HCT116 (cell line): ENCODE measurements at regions of chr6 and their contacts with region 1.

Region 1: DNA sequence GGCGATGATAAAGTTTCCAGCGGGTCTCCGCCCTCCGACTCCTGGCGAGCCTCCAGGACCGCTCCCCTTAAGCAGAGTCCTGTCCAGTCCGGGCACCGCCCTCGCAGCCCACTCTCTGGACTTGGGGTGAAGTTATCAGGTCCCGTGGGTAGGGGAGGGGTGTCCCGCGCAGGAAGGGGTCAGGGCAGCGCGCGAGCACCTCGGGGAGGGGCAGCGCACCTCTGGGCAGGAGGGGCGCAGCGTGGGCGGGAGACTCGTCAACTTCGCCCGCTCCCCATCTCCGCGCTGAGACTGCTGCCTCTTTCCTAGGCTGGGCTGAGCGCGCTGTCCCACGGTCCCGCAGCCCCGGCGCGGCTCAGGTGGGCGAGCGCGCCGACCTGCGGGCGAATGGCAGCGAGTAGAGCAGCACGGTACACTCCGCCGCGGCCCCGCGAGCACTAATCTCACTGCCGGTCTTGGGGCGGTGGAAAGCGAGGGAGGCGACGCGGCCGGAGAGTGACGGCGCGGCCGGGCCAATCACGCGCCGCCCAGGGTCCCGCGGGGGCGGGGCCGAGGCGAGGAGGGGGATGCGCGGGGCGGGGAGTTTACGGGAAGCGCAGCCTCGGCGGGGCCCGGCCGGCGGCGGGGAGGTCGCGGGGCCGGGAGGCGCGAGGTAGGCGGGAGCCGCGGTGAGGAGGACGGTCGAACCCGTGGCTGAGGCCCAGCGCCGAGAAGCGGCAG is at the start of gene MAN1A1:
- DNase-seq: peak; percentile 56
- ATAC-seq: peak; percentile 90
- H3K4me3 ChIP-seq: peak within 1 kb of the TSS; percentile 82 to 86
- H3K27ac ChIP-seq: peak within 1 kb of the TSS; percentile 78
- H3K4me1 ChIP-seq: peaks cover 12 to 15% of the 10 kb centered on the region in 2 experiments
- H3K27me3 ChIP-seq: no peaks in the 10 kb centered on the region
- CTCF ChIP-seq: no peak
- POLR2A ChIP-seq: peak; percentile 72
- RAD21 ChIP-seq: peak; percentile 5; the same call in 1 of the 2 replicates
- total RNA-seq, gene MAN1A1: 46.0 TPM

Region 2: DNA sequence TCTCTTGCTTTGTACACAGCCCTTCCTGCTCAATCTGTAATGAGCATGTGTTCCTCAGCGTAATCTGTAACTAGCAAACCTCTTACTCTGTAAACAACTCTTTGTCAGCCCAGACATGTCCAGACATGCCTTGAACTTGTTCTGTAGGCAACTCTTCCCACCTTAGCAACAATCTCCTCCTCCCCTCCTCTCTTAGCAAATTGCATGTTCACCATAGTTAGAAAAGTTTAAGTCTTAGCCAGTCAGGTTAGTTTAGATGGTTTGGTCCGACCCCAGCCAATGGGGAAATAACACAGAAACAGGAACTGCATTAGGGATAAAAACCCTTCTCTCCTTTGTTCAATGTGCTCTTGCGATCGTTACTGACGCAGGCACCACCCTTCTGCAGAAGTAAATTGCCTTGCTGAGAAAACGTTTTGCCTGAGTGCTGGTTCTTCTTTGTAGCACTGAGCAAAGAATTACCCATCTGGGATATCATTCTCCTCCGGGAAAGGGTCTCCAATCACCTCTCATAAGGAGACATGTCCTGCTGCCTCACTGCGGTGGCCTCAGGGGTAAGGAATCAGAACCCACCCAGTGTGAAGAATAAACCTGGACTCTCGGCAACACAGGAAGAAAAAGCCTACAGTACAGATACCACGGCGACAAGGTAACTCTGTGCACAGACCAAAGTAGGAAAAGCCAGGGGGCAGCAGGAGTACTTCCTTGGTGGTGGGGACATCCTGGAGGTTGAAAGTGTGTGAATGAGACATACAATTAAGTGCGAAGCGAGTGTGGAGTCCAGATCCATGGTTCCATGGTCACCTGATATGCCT is 775.2 kb before region 1 on chr6:
- CTCF ChIA-PET with region 1: no interaction called
- POLR2A ChIA-PET with region 1: no interaction called
- RAD21 ChIA-PET with region 1: no interaction called
- intact Hi-C with region 1: no loop called
- DNase-seq: no peak
- ATAC-seq: no peak
- H3K4me3 ChIP-seq: no peak overlapping the region
- H3K27ac ChIP-seq: peak overlapping the region; percentile 30; the same call in 1 of the 2 replicates
- H3K4me1 ChIP-seq: no peaks in the 10 kb centered on the region
- H3K27me3 ChIP-seq: no peaks in the 10 kb centered on the region
- CTCF ChIP-seq: no peak
- POLR2A ChIP-seq: no peak
- RAD21 ChIP-seq: no peak

Region 3: GRCh38 chr6:119129148-119129967 is 220.1 kb before region 1 on chr6:
- CTCF ChIA-PET with region 1: interaction called, 7 read pairs
- POLR2A ChIA-PET with region 1: no interaction called
- RAD21 ChIA-PET with region 1: interaction called, 3 to 12 read pairs
- intact Hi-C with region 1: no loop called
- DNase-seq: peak; percentile 72
- ATAC-seq: peak; percentile 75
- H3K4me3 ChIP-seq: peak overlapping the region; percentile 3 to 31; a peak in 2 of 4 replicates
- H3K27ac ChIP-seq: peak overlapping the region; percentile 62
- H3K4me1 ChIP-seq: peaks cover 38 to 60% of the 10 kb centered on the region in 2 experiments
- H3K27me3 ChIP-seq: no peaks in the 10 kb centered on the region
- CTCF ChIP-seq: peak; percentile 66 to 90 (median 76); a peak in 5 of 6 replicates
- POLR2A ChIP-seq: no peak
- RAD21 ChIP-seq: peak; percentile 87

Region 4: GRCh38 chr6:119426619-119427018 is 77.1 kb after region 1 on chr6:
- CTCF ChIA-PET with region 1: no interaction called
- POLR2A ChIA-PET with region 1: no interaction called
- RAD21 ChIA-PET with region 1: no interaction called
- intact Hi-C with region 1: no loop called
- DNase-seq: no peak
- ATAC-seq: no peak
- H3K4me3 ChIP-seq: no peak overlapping the region
- H3K27ac ChIP-seq: no peak overlapping the region
- H3K4me1 ChIP-seq: no peaks in the 10 kb centered on the region
- H3K27me3 ChIP-seq: no peaks in the 10 kb centered on the region
- CTCF ChIP-seq: no peak
- POLR2A ChIP-seq: no peak
- RAD21 ChIP-seq: peak; percentile 8; the same call in 1 of the 2 replicates

Region 5: DNA sequence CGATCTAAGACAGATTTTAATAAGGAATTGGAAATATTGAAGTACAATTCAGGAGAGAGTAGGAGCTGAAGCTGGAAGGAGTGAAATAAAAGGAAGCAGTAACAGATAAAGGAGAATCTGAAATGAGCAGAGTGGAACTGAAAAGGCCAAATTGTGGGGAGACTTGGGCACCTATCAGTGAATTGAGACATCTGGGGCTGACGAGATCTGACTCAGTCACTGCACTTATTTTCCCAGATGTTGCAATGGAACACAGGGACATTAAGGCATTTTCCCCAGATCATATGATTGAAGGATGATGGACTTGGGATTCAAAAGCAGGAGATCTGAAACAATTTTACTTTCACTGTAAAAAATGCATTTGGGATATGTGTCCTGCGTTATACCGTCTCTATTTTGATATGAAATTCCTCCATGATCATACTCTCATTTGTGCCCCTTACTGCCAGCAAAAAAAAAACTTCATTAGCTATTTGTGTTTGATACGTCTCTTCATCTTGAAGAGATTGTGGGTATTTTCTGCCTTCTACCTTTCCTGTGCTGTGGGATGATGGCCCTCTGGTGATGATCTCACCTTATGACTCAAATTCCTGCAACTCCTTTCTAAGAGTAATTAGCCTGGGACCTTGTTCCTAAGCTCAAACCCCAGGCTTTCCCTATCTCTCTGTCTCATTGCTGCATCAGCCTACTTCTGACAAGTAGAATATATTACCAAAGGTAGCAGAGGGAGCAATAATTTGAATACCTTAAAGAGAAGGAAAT is 278.6 kb after region 1 on chr6:
- CTCF ChIA-PET with region 1: interaction called, 3 read pairs
- POLR2A ChIA-PET with region 1: no interaction called
- RAD21 ChIA-PET with region 1: no interaction called
- intact Hi-C with region 1: loop called (anchors 5 kb)
- DNase-seq: no peak
- ATAC-seq: peak; percentile 63; the same call in 1 of the 2 replicates
- H3K4me3 ChIP-seq: no peak overlapping the region
- H3K27ac ChIP-seq: no peak overlapping the region
- H3K4me1 ChIP-seq: no peaks in the 10 kb centered on the region; a peak in 1 of 4 replicates
- H3K27me3 ChIP-seq: no peaks in the 10 kb centered on the region
- CTCF ChIP-seq: no peak
- POLR2A ChIP-seq: no peak
- RAD21 ChIP-seq: peak; percentile 61

Region 6: DNA sequence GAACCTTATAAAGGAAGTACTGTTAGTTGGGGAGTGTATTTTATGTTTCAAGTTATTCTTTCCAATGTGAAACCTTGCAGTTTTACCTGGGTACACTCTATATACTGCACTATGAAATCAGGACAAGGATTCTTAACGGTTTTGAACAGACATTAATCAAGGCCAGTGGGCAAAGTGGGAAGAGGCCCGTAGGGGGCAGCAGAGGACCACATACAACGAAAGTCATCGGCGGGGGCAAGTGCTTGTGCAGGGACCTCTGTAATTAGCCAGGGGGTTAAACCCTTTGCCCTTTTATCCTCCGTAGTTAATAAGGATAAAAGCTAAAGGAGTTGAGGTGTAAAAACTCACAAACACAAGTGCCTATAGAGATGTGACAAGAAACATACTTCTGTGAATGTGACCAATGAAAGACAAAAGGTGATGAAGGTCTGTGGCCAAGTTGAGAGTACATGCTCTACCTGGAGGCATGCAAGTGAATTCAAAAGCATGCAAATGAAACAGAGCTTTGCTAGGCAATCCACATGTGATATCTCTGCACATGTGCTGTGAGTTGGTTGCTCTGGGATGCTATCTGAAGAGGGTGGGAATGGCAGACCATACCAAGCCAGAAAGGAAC is 392.8 kb after region 1 on chr6:
- CTCF ChIA-PET with region 1: interaction called, 8 read pairs
- POLR2A ChIA-PET with region 1: no interaction called
- RAD21 ChIA-PET with region 1: no interaction called
- intact Hi-C with region 1: loop called (anchors 1 kb)
- DNase-seq: peak; percentile 53
- ATAC-seq: peak; percentile 93
- H3K4me3 ChIP-seq: no peak overlapping the region
- H3K27ac ChIP-seq: no peak overlapping the region
- H3K4me1 ChIP-seq: no peaks in the 10 kb centered on the region
- H3K27me3 ChIP-seq: no peaks in the 10 kb centered on the region
- CTCF ChIP-seq: peak; percentile 76 to 94 (median 85); a peak in 5 of 6 replicates
- POLR2A ChIP-seq: no peak
- RAD21 ChIP-seq: peak; percentile 89

Region 7: DNA sequence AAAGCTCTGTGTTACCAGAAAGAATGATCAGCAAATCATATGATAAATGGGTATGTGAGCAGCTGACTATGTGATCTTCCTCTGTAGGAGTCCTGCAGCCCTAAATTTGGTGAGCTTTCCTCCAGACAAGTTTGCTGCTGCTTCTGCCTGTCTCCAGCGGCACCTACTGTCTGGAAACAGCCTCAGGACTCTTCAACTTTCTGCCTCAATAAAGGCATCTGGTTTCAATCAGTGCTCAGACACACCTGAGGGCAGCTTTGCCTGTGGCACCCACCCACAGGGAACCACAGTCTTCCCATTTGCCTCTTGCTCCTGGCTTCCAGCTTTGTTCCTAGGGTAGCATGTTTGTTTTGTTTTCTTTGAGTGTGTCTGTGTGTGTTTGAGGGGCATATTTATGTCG is 728.0 kb after region 1 on chr6:
- CTCF ChIA-PET with region 1: interaction called, 3 read pairs
- POLR2A ChIA-PET with region 1: no interaction called
- RAD21 ChIA-PET with region 1: no interaction called
- intact Hi-C with region 1: loop called (anchors 10 kb)
- DNase-seq: peak; percentile 23
- ATAC-seq: peak; percentile 82
- H3K4me3 ChIP-seq: no peak overlapping the region
- H3K27ac ChIP-seq: no peak overlapping the region
- H3K4me1 ChIP-seq: no peaks in the 10 kb centered on the region
- H3K27me3 ChIP-seq: no peaks in the 10 kb centered on the region
- CTCF ChIP-seq: peak; percentile 36 to 46 (median 38); a peak in 5 of 6 replicates
- POLR2A ChIP-seq: no peak
- RAD21 ChIP-seq: peak; percentile 82

Region 8: GRCh38 chr6:120826253-120826652 is 1476.8 kb after region 1 on chr6:
- CTCF ChIA-PET with region 1: no interaction called
- POLR2A ChIA-PET with region 1: no interaction called
- RAD21 ChIA-PET with region 1: no interaction called
- intact Hi-C with region 1: loop called (anchors 10 kb)
- DNase-seq: peak; percentile 53
- ATAC-seq: peak; percentile 87
- H3K4me3 ChIP-seq: no peak overlapping the region
- H3K27ac ChIP-seq: no peak overlapping the region
- H3K4me1 ChIP-seq: no peaks in the 10 kb centered on the region
- H3K27me3 ChIP-seq: no peaks in the 10 kb centered on the region
- CTCF ChIP-seq: peak; percentile 65 to 84 (median 84); a peak in 5 of 6 replicates
- POLR2A ChIP-seq: no peak
- RAD21 ChIP-seq: peak; percentile 79